ENCODE measurements at regions of chr12 and their contacts with region 1.

Region 1: DNA sequence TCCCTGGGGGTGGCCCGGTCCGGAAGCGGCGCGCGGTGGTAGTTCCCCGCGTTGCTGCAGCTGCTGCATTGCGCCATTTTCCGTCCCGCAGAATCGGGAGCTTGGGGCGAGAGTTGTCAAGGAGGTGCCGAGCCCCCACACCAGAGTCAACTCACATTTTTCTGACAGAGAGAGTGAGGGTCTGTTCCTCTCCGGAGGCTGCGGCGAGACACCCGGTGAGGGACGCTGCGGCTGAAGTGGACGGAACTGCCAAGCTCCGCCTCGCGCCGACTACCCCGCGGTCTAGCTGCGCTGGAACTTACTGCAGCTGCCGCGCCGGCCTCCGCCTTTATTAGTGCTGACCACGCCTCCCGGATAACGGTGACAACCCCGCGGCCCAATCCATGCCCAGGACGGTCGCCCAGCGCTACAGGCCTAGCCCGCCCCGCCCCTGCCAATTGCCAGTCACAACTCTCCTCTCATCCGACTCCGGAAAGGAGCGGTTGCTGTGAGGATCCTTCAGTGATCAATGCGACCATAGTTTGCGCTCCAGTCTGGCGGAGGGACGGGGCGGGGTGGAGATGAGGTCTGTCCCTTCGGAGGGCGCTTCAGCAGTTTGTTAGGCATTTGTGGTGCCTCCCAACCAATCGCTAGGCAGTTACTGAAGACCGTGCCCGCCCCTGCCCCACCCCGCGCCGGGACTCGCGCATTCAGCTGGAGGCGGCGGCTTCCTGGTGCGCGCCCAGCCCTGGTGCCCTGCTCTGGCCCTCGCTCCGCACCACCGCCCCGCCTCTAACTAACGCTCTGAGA is at the start of gene VAMP1:
- DNase-seq: peak; percentile 97
- H3K4me3 Mint-ChIP-seq: peak within 1 kb of the TSS; percentile 93
- H3K27ac Mint-ChIP-seq: peak within 1 kb of the TSS; percentile 85
- H3K4me1 Mint-ChIP-seq: peaks cover 57% of the 10 kb centered on the region
- H3K27me3 Mint-ChIP-seq: peaks cover 1% of the 10 kb centered on the region
- total RNA-seq, gene VAMP1: 49.7 and 52.8 TPM in 2 replicates

Region 2: GRCh38 chr12:5026342-5026938 is 1444.1 kb before region 1 on chr12:
- intact Hi-C with region 1: no loop called
- DNase-seq: no peak
- H3K4me3 Mint-ChIP-seq: no peak overlapping the region
- H3K27ac Mint-ChIP-seq: no peak overlapping the region
- H3K4me1 Mint-ChIP-seq: no peaks in the 10 kb centered on the region
- H3K27me3 Mint-ChIP-seq: peaks cover 11% of the 10 kb centered on the region

Region 3: DNA sequence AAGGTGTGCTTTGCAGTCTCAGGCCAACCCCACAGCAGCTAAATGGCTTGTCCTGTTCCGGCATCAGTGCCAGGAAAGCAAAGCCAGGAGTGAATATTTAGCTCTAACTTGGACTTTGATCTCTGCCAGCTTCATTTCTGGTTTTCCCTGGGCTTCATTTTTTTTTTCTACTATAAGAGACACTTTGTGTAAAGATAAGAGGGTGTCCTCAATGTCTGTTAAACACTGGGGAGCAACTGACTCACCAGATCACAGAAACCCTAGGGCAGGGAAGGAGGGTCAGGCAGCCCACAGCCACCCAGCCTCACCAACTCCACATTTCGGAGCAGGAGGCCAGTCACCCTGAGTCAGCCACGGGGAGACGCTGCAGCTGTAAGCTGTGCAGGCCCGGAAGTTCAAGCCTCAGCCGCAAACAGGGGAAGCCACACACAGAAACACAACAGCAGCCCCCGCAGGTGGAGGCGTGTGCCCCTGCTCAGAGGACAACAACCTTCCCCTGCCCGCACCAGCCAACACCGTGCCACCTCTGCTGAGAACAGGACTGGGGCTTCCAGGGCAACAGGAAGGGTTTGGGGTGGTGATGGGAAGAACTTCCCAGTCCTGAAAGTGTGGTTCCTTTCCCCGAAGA is 135.0 kb before region 1 on chr12:
- intact Hi-C with region 1: loop called (anchors 1 kb)
- DNase-seq: peak; percentile 80
- H3K4me3 Mint-ChIP-seq: no peak overlapping the region
- H3K27ac Mint-ChIP-seq: no peak overlapping the region
- H3K4me1 Mint-ChIP-seq: peaks cover 37% of the 10 kb centered on the region
- H3K27me3 Mint-ChIP-seq: no peaks in the 10 kb centered on the region

Region 4: DNA sequence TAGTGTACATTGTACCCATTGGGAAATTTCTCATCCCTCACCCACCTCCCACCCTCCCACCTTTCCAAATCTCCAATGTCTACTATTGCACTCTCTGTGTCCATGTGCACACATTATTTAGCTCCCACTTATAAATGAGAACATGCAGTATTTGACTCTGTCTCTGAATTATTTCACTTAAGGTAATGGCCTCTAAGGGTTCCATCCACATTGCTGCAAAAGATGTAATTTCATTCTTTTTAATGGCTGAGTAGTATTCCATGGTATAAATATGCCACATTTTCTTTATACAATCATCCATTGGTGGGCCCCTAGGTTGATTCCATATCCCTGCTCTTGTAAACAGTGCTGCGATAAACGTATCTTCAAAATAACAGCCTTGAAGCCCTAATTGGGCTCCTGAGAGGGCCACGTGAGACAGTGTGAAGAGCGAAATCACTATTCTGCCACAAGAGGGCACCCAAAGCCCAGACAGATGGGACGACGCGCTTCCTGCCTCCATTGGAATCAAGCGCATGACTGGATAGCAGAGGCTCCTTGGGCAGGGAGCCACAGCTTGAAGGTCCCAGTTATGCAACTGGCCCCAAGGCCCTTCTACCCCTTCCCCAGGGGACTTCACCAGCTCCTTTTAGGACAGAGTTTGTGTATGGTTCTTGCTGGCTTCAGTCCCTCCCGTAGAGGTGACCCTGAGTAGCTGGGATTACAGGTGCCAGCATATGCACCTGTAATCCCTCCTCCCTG is 47.1 kb before region 1 on chr12:
- intact Hi-C with region 1: loop called (anchors 1 kb)
- DNase-seq: peak; percentile 75
- H3K4me3 Mint-ChIP-seq: no peak overlapping the region
- H3K27ac Mint-ChIP-seq: peak overlapping the region; percentile 50
- H3K4me1 Mint-ChIP-seq: peaks cover 44% of the 10 kb centered on the region
- H3K27me3 Mint-ChIP-seq: peaks cover 1% of the 10 kb centered on the region

Region 5: GRCh38 chr12:6533923-6534694 is 63.5 kb after region 1 on chr12 and contains the start of gene GAPDH:
- intact Hi-C with region 1: loop called (anchors 1 kb)
- DNase-seq: peak; percentile 86
- H3K4me3 Mint-ChIP-seq: peak within 1 kb of the TSS; percentile 91
- H3K27ac Mint-ChIP-seq: peak within 1 kb of the TSS; percentile 99
- H3K4me1 Mint-ChIP-seq: peaks cover 58% of the 10 kb centered on the region
- H3K27me3 Mint-ChIP-seq: no peaks in the 10 kb centered on the region
- total RNA-seq, gene GAPDH: 4,315 and 4,318 TPM in 2 replicates

Region 6: DNA sequence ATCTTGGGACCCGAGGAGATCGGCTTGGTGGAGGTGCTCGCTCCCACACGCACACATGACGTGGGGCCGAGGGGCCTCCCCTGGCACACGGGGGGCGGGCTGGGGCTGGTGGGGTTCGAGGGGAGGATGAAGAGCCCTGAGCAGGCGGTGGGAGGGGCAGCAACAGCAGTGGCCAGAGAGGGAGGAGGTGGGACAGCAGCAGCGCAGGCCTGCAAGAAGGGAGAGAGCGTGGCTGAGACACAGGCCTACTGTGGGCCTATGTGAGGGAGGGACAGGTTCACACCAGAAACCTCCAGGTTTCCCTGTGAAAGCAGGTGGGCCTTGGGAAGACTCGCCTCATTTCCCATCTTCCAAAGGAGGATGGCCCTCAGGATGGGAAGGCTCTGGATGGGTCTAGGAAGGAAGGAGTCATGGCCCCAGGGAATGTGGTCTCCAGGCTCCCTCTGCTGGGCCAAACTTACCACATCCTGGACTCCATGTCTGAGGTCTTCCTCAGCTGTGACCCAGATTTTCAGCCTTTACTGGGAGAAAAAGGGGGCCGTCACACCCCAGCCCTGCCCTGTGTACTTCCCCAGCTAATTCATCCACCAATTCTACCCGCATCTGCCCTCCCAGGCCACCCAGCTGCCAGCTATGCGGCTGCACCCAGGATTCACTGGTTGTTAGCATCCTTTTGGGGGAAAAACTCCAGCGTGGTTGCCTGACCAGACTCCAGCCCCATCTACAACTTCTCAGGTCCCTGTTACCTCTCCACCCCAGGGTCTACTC is 227.2 kb after region 1 on chr12:
- intact Hi-C with region 1: no loop called
- DNase-seq: no peak
- H3K4me3 Mint-ChIP-seq: no peak overlapping the region
- H3K27ac Mint-ChIP-seq: no peak overlapping the region
- H3K4me1 Mint-ChIP-seq: peaks cover 6% of the 10 kb centered on the region
- H3K27me3 Mint-ChIP-seq: peaks cover 46% of the 10 kb centered on the region

Region 7: DNA sequence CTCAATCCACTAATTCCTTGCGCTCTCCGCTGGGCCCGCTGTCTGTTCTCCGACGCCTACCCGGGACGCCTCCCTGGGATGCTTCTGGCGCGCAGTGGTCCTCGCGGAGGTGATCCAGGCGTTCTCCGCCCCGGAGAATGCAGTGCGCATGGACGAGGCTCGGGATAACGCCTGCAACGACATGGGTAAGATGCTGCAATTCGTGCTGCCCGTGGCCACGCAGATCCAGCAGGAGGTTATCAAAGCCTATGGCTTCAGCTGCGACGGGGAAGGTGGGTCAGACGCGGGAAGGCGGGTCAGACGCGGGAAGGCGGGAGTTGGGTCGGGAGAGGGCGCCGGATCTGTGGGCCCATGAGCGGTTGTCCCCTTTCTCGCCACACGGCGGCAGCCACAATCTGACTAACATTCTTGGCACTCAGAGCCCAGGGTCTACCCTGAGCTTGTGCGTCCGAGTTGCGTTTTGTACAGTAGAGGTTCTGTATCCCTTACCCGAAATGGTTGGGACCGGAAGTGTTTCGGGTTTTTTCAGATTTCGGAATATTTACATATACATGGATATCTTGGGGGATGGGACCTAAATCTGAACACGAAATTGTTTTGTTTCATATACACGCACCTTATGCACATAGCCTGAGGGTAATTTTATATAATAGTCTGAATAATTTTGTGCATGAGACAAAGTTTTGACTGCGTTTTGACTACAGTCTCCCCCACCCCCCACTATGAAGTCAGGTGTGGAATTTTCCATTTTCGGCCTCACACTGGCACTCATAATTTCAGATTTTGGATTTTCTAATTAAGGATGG is 474.0 kb after region 1 on chr12:
- intact Hi-C with region 1: loop called (anchors 5 kb)
- DNase-seq: peak; percentile 84
- H3K4me3 Mint-ChIP-seq: peak overlapping the region; percentile 96
- H3K27ac Mint-ChIP-seq: peak overlapping the region; percentile 95
- H3K4me1 Mint-ChIP-seq: peaks cover 71% of the 10 kb centered on the region
- H3K27me3 Mint-ChIP-seq: no peaks in the 10 kb centered on the region

Measured in activated T-helper 1 cell treated with anti-CD3 and anti-CD28 coated beads, Interleukin-12 subunit alpha, Interleukin-12 subunit beta, Interleukin-2, Interleukin-4 antibody, amounts not matched to agents 30 ng/mL and 10 ng/mL and 1 ng/mL, durations not matched to agents 14 hours and 24 hours and 36 hours (primary cell).